ENCODE measurements at regions of chrX and their contacts with region 1.

Region 1: DNA sequence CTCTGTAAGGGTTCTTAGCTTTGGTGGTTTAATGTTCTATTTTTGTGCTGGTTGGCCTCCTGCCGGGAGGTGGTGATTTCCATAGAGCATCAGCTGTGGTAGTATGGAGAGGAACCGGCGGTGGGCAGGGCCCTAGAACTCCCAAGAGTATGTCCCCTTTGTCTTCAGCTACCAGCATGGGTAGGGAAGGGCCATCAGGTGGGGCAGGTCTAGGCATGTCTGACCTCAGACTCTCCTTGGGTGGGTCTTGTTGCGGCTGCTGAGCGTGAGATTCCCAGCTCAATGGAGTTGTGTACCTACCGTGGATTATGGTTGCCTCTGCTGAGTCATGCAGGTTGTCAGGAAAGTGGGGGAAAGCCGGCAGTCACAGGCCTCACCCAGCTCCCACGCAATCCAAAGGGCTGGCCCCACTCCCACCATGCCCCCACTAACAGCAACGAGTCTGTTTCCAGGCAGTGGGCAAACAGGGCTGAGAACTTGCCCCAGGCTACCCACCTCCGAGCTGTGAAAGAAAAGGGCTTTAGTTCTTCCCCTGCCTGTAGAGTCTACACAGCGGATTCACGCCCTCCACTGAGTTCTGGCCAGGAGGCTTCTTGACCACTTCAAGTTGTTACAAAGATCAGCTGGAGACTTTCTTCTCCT is 235.9 kb downstream of the RPA4 start:
- DNase-seq: no peak
- ATAC-seq: no peak
- H3K4me3 ChIP-seq: no peak overlapping the region
- H3K27ac ChIP-seq: no peak overlapping the region
- H3K4me1 ChIP-seq: no peaks in the 10 kb centered on the region
- H3K27me3 ChIP-seq: no peaks in the 10 kb centered on the region
- CTCF ChIP-seq: no peak
- EP300 ChIP-seq: no peak
- POLR2A ChIP-seq: no peak
- RAD21 ChIP-seq: no peak

Region 2: GRCh38 chrX:96971812-96972211 is 147.8 kb before region 1 on chrX:
- CTCF ChIA-PET with region 1: no interaction called
- POLR2A ChIA-PET with region 1: no interaction called
- in situ Hi-C with region 1: no loop called
- intact Hi-C with region 1: no loop called
- DNase-seq: no peak
- ATAC-seq: no peak
- H3K4me3 ChIP-seq: no peak overlapping the region
- H3K27ac ChIP-seq: no peak overlapping the region
- H3K4me1 ChIP-seq: no peaks in the 10 kb centered on the region
- H3K27me3 ChIP-seq: no peaks in the 10 kb centered on the region
- CTCF ChIP-seq: no peak
- EP300 ChIP-seq: no peak
- POLR2A ChIP-seq: no peak
- RAD21 ChIP-seq: no peak

Region 3: DNA sequence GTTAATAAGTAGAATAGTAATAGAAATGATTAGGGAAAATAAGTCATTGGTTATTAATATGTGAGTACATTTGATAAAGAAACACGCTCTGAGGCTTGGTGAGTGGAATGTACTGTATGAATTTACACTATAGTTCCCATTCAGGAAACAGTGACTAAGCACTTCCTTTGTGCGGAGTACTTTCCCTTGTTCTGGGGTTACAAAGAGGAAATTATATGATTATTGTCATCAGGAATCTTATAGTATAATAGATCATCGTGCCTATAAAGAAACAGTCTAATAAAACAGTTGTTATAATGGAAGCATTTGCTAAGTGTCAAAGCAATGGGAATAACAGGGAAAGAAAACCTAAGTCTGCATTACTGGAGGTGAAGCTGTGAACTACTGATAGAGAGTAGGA is 97.9 kb before region 1 on chrX:
- CTCF ChIA-PET with region 1: no interaction called
- POLR2A ChIA-PET with region 1: no interaction called
- in situ Hi-C with region 1: no loop called
- intact Hi-C with region 1: no loop called
- DNase-seq: no peak
- ATAC-seq: no peak
- H3K4me3 ChIP-seq: no peak overlapping the region
- H3K27ac ChIP-seq: no peak overlapping the region
- H3K4me1 ChIP-seq: no peaks in the 10 kb centered on the region
- H3K27me3 ChIP-seq: no peaks in the 10 kb centered on the region
- CTCF ChIP-seq: no peak
- EP300 ChIP-seq: no peak
- POLR2A ChIP-seq: no peak
- RAD21 ChIP-seq: no peak

Region 4: GRCh38 chrX:97159916-97160800 is 40.6 kb after region 1 on chrX:
- CTCF ChIA-PET with region 1: no interaction called
- POLR2A ChIA-PET with region 1: no interaction called
- in situ Hi-C with region 1: no loop called
- intact Hi-C with region 1: loop called (anchors 2 kb)
- DNase-seq: no peak
- ATAC-seq: no peak
- H3K4me3 ChIP-seq: no peak overlapping the region
- H3K27ac ChIP-seq: no peak overlapping the region
- H3K4me1 ChIP-seq: no peaks in the 10 kb centered on the region
- H3K27me3 ChIP-seq: no peaks in the 10 kb centered on the region
- CTCF ChIP-seq: no peak
- EP300 ChIP-seq: no peak
- POLR2A ChIP-seq: no peak
- RAD21 ChIP-seq: no peak

Measured in K562 (cell line).